T-cell (primary cell): ENCODE measurements at regions of chr4 and their contacts with region 1.

Region 1: DNA sequence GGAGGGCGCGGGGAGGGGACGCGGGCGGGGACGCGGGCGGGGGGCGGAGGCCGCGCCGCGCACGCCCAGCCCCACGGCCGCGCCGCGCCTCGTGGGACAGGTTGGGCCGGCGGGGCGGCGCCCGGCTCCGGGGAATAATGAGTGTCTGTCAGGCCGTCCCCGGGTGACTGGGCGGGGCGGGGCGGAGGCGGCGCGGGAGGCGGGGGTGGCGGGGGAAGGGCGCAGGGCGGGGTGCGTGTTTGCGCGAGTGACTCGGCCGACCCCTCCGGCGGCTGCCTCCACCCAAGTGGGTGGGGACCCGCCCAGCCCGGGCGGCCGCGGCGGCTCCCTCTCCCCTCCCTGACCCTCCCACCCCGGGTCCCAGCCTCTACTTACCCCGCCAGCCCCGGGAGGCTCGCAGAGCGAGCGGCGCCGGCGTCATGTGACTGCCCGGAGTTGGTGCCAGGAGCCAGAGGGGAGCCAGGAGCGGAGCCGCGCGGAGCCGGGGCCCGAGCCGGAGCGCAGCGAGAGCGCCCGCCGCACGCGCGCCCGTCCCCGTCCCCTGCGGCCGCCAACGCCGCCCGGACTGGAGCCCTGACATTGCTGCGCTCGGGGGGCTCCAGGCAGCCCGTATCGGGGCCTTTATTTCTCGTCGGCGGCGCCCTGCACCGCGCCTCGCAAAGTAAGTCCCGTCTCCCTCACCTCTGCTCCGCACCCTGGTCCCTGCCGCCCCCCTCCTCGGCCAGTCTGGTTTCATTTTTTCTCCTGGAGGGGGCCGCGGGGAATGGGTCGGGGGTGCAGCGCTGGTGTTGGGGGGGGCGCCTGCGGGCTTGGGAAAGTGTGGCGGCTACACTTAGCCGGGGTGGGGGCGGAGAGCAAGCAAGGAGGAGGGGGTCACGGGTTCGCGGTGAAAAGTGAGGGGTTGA is at the start of gene KLF3:
- DNase-seq: peak; percentile 84 to 96 (median 93)
- ATAC-seq: peak; percentile 76 to 87 (median 83)
- H3K4me3 ChIP-seq: peak within 1 kb of the TSS; percentile 83 to 93
- H3K4me3 Mint-ChIP-seq: peak within 1 kb of the TSS; percentile 97 to 99 (median 97)
- H3K27ac ChIP-seq: peak within 1 kb of the TSS; percentile 93
- H3K27ac Mint-ChIP-seq: peak within 1 kb of the TSS; percentile 90 to 99
- H3K4me1 ChIP-seq: peaks cover 34 to 36% of the 10 kb centered on the region in 2 experiments
- H3K4me1 Mint-ChIP-seq: peaks cover 64 to 69% (median 68%) of the 10 kb centered on the region in 3 donors
- H3K27me3 ChIP-seq: no peaks in the 10 kb centered on the region
- H3K27me3 Mint-ChIP-seq: no peaks in the 10 kb centered on the region
- total RNA-seq, gene KLF3: 115 to 127 (median 124) TPM

Region 2: GRCh38 chr4:38319456-38320342 is 344.4 kb before region 1 on chr4:
- CTCF ChIA-PET with region 1: interaction called, 7 to 27 read pairs
- POLR2A ChIA-PET with region 1: interaction called in 1 of 2 experiments, 15 read pairs
- DNase-seq: peak; percentile 60 to 97 (median 84)
- ATAC-seq: peak; percentile 73 to 86 (median 79)
- H3K4me3 ChIP-seq: peak overlapping the region; percentile 50 to 65
- H3K4me3 Mint-ChIP-seq: peak overlapping the region; percentile 71 to 83 (median 79)
- H3K27ac ChIP-seq: peak overlapping the region; percentile 69
- H3K27ac Mint-ChIP-seq: peak overlapping the region; percentile 95
- H3K4me1 ChIP-seq: peaks cover 26 to 34% of the 10 kb centered on the region in 2 experiments
- H3K4me1 Mint-ChIP-seq: peaks cover 45 to 74% (median 57%) of the 10 kb centered on the region in 3 donors
- H3K27me3 ChIP-seq: no peaks in the 10 kb centered on the region
- H3K27me3 Mint-ChIP-seq: no peaks in the 10 kb centered on the region

Region 3: GRCh38 chr4:38503689-38504395 is 160.2 kb before region 1 on chr4:
- CTCF ChIA-PET with region 1: no interaction called
- POLR2A ChIA-PET with region 1: interaction called in 1 of 2 experiments, 12 read pairs
- DNase-seq: no peak
- ATAC-seq: no peak
- H3K4me3 ChIP-seq: no peak overlapping the region
- H3K4me3 Mint-ChIP-seq: no peak overlapping the region
- H3K27ac ChIP-seq: no peak overlapping the region
- H3K27ac Mint-ChIP-seq: no peak overlapping the region
- H3K4me1 ChIP-seq: peaks cover 13 to 17% of the 10 kb centered on the region in 2 experiments
- H3K4me1 Mint-ChIP-seq: peaks cover 49 to 53% (median 51%) of the 10 kb centered on the region in 3 donors
- H3K27me3 ChIP-seq: no peaks in the 10 kb centered on the region
- H3K27me3 Mint-ChIP-seq: no peaks in the 10 kb centered on the region

Region 4: GRCh38 chr4:38675146-38676121 is 11.4 kb after region 1 on chr4:
- CTCF ChIA-PET with region 1: interaction called, 7 to 15 read pairs
- POLR2A ChIA-PET with region 1: interaction called in 1 of 2 experiments, 3 read pairs
- DNase-seq: peak; percentile 55 to 94 (median 78)
- ATAC-seq: peak; percentile 51 to 65 (median 58)
- H3K4me3 ChIP-seq: no peak overlapping the region
- H3K4me3 Mint-ChIP-seq: peak overlapping the region; percentile 70 to 97 (median 82)
- H3K27ac ChIP-seq: peak overlapping the region; percentile 72
- H3K27ac Mint-ChIP-seq: peak overlapping the region; percentile 94 to 96
- H3K4me1 ChIP-seq: peaks cover 60 to 72% of the 10 kb centered on the region in 2 experiments
- H3K4me1 Mint-ChIP-seq: peaks cover 87 to 98% (median 94%) of the 10 kb centered on the region in 3 donors
- H3K27me3 ChIP-seq: no peaks in the 10 kb centered on the region
- H3K27me3 Mint-ChIP-seq: no peaks in the 10 kb centered on the region

Region 5: GRCh38 chr4:38699112-38699511 is 35.1 kb after region 1 on chr4:
- CTCF ChIA-PET with region 1: no interaction called
- POLR2A ChIA-PET with region 1: no interaction called
- DNase-seq: no peak
- ATAC-seq: no peak
- H3K4me3 ChIP-seq: no peak overlapping the region
- H3K4me3 Mint-ChIP-seq: no peak overlapping the region
- H3K27ac ChIP-seq: no peak overlapping the region
- H3K27ac Mint-ChIP-seq: peak overlapping the region in 1 of 2 donors; percentile 10
- H3K4me1 ChIP-seq: no peaks in the 10 kb centered on the region
- H3K4me1 Mint-ChIP-seq: peaks cover 4 to 35% (median 16%) of the 10 kb centered on the region in 3 donors
- H3K27me3 ChIP-seq: no peaks in the 10 kb centered on the region
- H3K27me3 Mint-ChIP-seq: no peaks in the 10 kb centered on the region

Region 6: DNA sequence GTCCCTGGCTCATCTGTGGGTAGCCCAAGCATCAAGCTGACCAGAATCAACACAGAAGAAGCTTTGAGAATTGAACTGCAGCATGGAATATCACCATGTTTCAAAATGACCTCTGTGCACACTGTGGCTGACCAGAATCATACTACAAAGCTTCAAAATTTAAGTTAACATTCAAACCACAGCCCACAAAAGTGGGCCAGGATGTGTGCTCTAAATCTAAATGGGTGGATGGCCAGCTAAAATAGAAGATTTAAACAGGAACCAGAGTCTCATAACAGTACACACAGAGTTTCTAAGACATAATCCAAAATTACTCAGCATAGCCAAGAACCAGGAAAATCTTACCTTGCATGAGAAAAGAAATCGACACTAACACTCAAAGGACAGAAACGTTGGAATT is 46.0 kb after region 1 on chr4:
- CTCF ChIA-PET with region 1: no interaction called
- POLR2A ChIA-PET with region 1: no interaction called
- DNase-seq: no peak
- ATAC-seq: no peak
- H3K4me3 ChIP-seq: no peak overlapping the region
- H3K4me3 Mint-ChIP-seq: no peak overlapping the region
- H3K27ac ChIP-seq: no peak overlapping the region
- H3K27ac Mint-ChIP-seq: no peak overlapping the region
- H3K4me1 ChIP-seq: peaks cover 0 to 3% of the 10 kb centered on the region in 2 experiments
- H3K4me1 Mint-ChIP-seq: peaks cover 5 to 24% (median 12%) of the 10 kb centered on the region in 3 donors
- H3K27me3 ChIP-seq: no peaks in the 10 kb centered on the region
- H3K27me3 Mint-ChIP-seq: no peaks in the 10 kb centered on the region